Naive thymus-derived CD4-positive, alpha-beta T cell (primary cell): ENCODE measurements at regions of chr9 and their contacts with region 1.

Region 1: DNA sequence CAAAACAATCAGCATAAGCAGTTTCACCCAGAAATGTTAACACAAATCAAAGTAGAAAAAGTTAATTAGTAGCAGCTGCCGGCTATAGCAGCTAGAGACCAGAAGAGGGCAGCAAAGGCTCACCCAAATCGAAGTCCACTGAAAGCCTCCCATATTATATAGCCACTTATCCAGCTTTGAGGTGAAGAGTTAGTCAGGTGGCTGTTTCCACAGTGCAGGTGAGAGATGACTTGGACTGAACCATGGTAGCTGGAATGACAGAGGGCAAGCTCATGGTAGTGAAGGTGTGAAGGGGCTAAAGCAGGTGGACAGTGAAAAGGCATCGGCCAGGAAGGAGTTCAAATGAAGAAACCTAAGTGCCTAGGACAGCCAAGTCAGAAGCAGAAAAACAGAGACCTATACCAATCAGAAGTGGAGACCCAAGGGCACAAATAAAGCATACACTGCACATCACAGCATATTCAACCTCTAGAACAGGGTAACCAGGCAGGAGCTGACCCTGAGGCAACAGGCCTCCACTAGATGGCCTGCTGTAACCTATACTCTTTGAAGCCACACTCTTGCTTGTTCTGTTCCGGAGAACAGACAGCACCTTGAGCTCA is 7.2 kb upstream of the RNF38 start:
- DNase-seq: peak; percentile 18 to 77 (median 67)
- ATAC-seq: peak; percentile 96
- H3K4me3 ChIP-seq: no peak overlapping the region
- H3K4me3 Mint-ChIP-seq: peak overlapping the region in 3 of 10 donors; percentile 0 to 15 (median 14)
- H3K27ac ChIP-seq: peak overlapping the region; percentile 30
- H3K27ac Mint-ChIP-seq: peak overlapping the region; percentile 1 to 94 (median 71)
- H3K4me1 ChIP-seq: peaks cover 0 to 7% of the 10 kb centered on the region in 2 donors
- H3K4me1 Mint-ChIP-seq: peaks cover 11 to 42% (median 24%) of the 10 kb centered on the region in 7 donors
- H3K27me3 ChIP-seq: no peaks in the 10 kb centered on the region
- H3K27me3 Mint-ChIP-seq: no peaks in the 10 kb centered on the region

Region 2: GRCh38 chr9:35903049-35903448 is 504.2 kb before region 1 on chr9:
- CTCF ChIA-PET with region 1: no interaction called
- POLR2A ChIA-PET with region 1: no interaction called
- intact Hi-C with region 1: no loop called
- DNase-seq: peak in 7 of 9 donors; percentile 41 to 69 (median 63)
- ATAC-seq: peak; percentile 88
- H3K4me3 ChIP-seq: no peak overlapping the region
- H3K4me3 Mint-ChIP-seq: no peak overlapping the region
- H3K27ac ChIP-seq: no peak overlapping the region
- H3K27ac Mint-ChIP-seq: peak overlapping the region in 1 of 9 donors; percentile 67
- H3K4me1 ChIP-seq: peaks cover 3 to 31% of the 10 kb centered on the region in 2 donors
- H3K4me1 Mint-ChIP-seq: peaks cover 8 to 45% (median 28%) of the 10 kb centered on the region in 7 donors
- H3K27me3 ChIP-seq: peaks cover 0 to 3% of the 10 kb centered on the region in 2 donors
- H3K27me3 Mint-ChIP-seq: peaks cover 0 to 23% (median 0%) of the 10 kb centered on the region in 5 donors

Region 3: DNA sequence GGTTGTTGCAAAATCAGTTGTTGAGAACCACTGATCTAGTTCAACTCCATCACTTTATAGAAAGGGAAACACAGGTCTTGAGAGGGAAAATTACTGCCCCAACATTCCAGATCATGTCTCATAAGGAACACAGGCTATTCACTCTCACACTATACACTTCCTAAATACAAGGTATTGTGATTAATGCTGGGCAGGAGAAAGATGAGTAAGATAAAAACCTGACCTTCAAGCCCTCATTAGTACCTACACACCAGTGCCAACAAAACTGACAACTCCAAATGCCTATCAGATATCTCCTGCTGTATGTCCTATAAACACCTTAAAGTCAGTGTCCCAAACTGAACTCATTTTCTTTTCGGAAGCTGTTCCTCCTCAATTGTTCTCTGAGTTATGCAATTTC is 157.1 kb before region 1 on chr9:
- CTCF ChIA-PET with region 1: no interaction called
- POLR2A ChIA-PET with region 1: no interaction called
- intact Hi-C with region 1: loop called in 1 of 2 experiments (anchors 2 kb)
- DNase-seq: no peak
- ATAC-seq: no peak
- H3K4me3 ChIP-seq: no peak overlapping the region
- H3K4me3 Mint-ChIP-seq: no peak overlapping the region
- H3K27ac ChIP-seq: no peak overlapping the region
- H3K27ac Mint-ChIP-seq: peak overlapping the region in 2 of 9 donors; percentile 0 to 4
- H3K4me1 ChIP-seq: no peaks in the 10 kb centered on the region
- H3K4me1 Mint-ChIP-seq: peaks cover 10 to 25% (median 15%) of the 10 kb centered on the region in 7 donors
- H3K27me3 ChIP-seq: no peaks in the 10 kb centered on the region
- H3K27me3 Mint-ChIP-seq: no peaks in the 10 kb centered on the region

Region 4: DNA sequence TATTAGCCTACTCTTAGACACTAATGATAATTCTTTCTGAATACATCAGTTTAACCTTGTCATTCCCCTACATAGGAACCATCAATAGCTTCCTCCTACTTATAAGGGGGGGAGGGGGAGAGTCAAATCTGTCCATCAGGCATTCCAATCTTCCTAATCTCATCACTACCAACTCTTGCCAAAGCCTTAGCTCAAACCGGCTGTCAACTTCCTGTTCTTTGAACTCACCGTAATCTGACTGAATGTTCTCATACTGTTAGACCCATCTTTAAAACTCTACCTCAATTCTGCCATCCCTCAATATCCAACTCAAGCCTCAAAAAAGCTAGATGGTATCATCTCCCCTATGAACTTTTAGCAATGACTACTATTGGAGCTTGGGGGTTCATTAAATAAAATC is 34.7 kb after region 1 on chr9:
- CTCF ChIA-PET with region 1: interaction called, 21 read pairs
- POLR2A ChIA-PET with region 1: interaction called, 3 read pairs
- intact Hi-C with region 1: loop called in 1 of 2 experiments (anchors 2 kb)
- DNase-seq: peak in 3 of 9 donors; percentile 2 to 22 (median 14)
- ATAC-seq: peak; percentile 45
- H3K4me3 ChIP-seq: no peak overlapping the region
- H3K4me3 Mint-ChIP-seq: peak overlapping the region in 6 of 10 donors; percentile 1 to 51 (median 39)
- H3K27ac ChIP-seq: no peak overlapping the region
- H3K27ac Mint-ChIP-seq: peak overlapping the region in 1 of 9 donors; percentile 0
- H3K4me1 ChIP-seq: peaks cover 0 to 35% of the 10 kb centered on the region in 2 donors
- H3K4me1 Mint-ChIP-seq: peaks cover 30 to 81% (median 73%) of the 10 kb centered on the region in 7 donors
- H3K27me3 ChIP-seq: no peaks in the 10 kb centered on the region
- H3K27me3 Mint-ChIP-seq: no peaks in the 10 kb centered on the region

Region 5: DNA sequence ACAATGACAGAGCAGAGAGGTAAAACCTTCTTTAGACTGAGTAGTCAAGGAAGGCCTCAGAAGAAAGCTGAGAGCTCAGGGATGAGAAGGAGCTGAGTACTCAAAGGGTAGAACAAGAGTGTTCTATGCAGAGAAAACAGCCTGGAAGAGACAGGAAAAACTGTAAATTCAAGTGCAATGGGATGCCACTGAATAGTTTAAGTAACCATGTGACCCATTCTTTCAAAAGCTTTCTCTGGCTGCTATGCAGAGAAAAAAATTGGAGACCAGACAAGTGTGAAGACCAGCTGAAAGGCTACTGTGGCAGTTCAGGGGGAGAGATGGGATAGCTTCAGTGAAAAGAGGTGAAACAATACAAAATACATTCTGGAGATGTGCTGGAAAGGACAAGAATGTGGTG is 54.1 kb after region 1 on chr9:
- CTCF ChIA-PET with region 1: interaction called, 15 read pairs
- POLR2A ChIA-PET with region 1: no interaction called
- intact Hi-C with region 1: loop called in 1 of 2 experiments (anchors 2 kb)
- DNase-seq: no peak
- ATAC-seq: peak; percentile 12
- H3K4me3 ChIP-seq: no peak overlapping the region
- H3K4me3 Mint-ChIP-seq: no peak overlapping the region
- H3K27ac ChIP-seq: no peak overlapping the region
- H3K27ac Mint-ChIP-seq: peak overlapping the region; percentile 29 to 71 (median 57)
- H3K4me1 ChIP-seq: peaks cover 18 to 23% of the 10 kb centered on the region in 2 donors
- H3K4me1 Mint-ChIP-seq: peaks cover 36 to 76% (median 68%) of the 10 kb centered on the region in 7 donors
- H3K27me3 ChIP-seq: no peaks in the 10 kb centered on the region
- H3K27me3 Mint-ChIP-seq: no peaks in the 10 kb centered on the region

Region 6: DNA sequence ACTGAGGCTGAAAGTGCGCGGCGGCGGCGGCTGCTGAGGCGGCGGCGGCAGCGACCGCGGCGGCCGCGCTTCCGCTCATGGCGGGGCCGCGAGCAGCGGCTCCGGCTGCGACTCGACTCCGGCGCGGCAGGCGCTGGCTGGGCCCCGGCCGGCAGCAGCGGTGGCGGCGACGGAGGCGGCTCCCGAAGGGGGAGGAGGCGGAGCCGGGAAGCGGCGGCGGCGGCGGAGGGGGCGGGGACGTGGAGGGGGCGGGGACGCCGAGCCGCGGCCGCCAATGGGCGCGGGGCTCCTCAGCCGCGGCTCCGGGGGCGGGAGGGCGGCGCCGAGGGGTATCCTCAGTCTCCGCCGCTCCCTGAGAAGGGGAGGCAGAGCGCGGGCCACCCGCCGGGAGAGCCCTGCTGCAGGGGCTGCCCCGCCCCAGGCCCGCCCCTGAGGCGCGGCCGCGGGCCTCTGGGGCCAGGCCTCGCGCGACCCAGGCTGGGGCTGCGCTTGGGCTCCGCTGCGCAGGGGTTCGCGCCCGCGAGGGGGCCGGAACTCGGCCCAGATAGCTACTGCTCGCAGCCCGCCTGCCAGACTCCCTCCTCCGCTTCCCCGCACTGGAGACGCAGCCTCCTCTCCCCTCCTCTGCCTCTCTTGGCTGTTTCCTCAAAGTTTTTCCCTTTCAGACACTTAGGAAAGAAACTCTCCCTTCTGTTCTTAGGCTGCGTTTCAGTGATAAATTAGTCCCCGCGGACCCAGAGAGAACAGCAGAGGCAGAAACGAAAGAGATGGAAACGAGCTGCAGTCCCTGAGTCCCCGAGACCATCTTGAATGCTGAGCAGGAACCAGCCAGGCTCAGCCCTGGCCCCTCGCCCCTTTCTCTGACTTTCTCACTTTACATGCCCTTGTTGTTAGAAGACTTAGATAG is 80.5 kb after region 1 on chr9:
- CTCF ChIA-PET with region 1: interaction called, 11 read pairs
- POLR2A ChIA-PET with region 1: interaction called, 11 read pairs
- intact Hi-C with region 1: loop called in 1 of 2 experiments (anchors 1 kb)
- DNase-seq: peak; percentile 84 to 93 (median 89)
- ATAC-seq: peak; percentile 94
- H3K4me3 ChIP-seq: peak overlapping the region; percentile 77
- H3K4me3 Mint-ChIP-seq: peak overlapping the region; percentile 87 to 99 (median 96)
- H3K27ac ChIP-seq: peak overlapping the region; percentile 96
- H3K27ac Mint-ChIP-seq: peak overlapping the region; percentile 95 to 100 (median 98)
- H3K4me1 ChIP-seq: peaks cover 30 to 39% of the 10 kb centered on the region in 2 donors
- H3K4me1 Mint-ChIP-seq: peaks cover 33 to 77% (median 64%) of the 10 kb centered on the region in 7 donors
- H3K27me3 ChIP-seq: no peaks in the 10 kb centered on the region
- H3K27me3 Mint-ChIP-seq: no peaks in the 10 kb centered on the region

Region 7: GRCh38 chr9:36560857-36561221 is 153.6 kb after region 1 on chr9:
- CTCF ChIA-PET with region 1: interaction called, 253 read pairs
- POLR2A ChIA-PET with region 1: interaction called, 5 read pairs
- intact Hi-C with region 1: no loop called
- DNase-seq: no peak
- ATAC-seq: no peak
- H3K4me3 ChIP-seq: no peak overlapping the region
- H3K4me3 Mint-ChIP-seq: no peak overlapping the region
- H3K27ac ChIP-seq: no peak overlapping the region
- H3K27ac Mint-ChIP-seq: no peak overlapping the region
- H3K4me1 ChIP-seq: no peaks in the 10 kb centered on the region
- H3K4me1 Mint-ChIP-seq: peaks cover 0 to 2% (median under 1%) of the 10 kb centered on the region in 7 donors
- H3K27me3 ChIP-seq: no peaks in the 10 kb centered on the region
- H3K27me3 Mint-ChIP-seq: no peaks in the 10 kb centered on the region

Region 8: DNA sequence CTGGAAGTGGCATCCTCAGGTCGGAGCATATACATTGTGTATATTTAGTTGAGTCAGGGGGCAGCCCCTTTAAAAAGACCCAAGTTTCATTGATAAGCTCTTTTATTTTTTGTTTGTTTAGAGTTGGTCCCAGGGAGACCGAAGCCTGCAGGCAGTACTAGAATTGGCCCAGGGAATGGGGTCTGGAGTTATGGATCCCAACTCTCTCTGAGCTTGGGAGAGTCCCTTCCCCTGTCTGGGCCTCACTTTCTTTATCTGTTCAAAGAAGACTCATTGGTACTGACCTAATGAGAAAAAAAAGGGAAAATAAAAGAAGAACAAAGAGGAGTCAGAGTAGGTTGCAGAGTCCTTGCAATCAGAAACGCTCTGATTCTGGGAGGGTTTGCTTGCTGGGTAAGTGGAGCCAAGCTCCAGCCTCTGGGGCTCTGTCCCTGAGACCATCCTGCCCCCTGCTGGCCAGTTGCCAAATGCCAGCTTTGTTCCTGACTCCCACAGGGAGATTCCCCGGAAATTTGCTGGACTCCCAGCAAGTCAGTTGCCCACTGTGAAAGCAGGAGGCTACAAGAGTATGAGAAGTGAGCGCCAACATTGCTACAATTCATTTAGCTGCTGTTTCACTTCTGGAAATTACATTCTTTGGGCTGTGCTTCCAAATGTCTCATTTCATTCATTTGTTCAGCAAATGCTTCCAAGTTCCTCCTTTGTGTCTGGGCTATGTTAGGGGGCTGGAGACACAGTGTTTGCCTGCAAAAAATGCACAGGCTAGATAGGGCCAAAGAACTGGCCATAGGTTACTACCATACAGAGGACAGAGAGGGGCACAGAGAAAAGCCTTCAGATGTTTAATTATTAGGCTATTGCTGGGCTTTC is 321.7 kb after region 1 on chr9:
- CTCF ChIA-PET with region 1: interaction called, 43 read pairs
- POLR2A ChIA-PET with region 1: no interaction called
- intact Hi-C with region 1: loop called in 1 of 2 experiments (anchors 1 kb)
- DNase-seq: peak in 8 of 9 donors; percentile 33 to 71 (median 40)
- ATAC-seq: peak; percentile 73
- H3K4me3 ChIP-seq: no peak overlapping the region
- H3K4me3 Mint-ChIP-seq: no peak overlapping the region
- H3K27ac ChIP-seq: no peak overlapping the region
- H3K27ac Mint-ChIP-seq: no peak overlapping the region
- H3K4me1 ChIP-seq: no peaks in the 10 kb centered on the region
- H3K4me1 Mint-ChIP-seq: peaks cover 0 to 6% (median 0%) of the 10 kb centered on the region in 7 donors
- H3K27me3 ChIP-seq: no peaks in the 10 kb centered on the region
- H3K27me3 Mint-ChIP-seq: no peaks in the 10 kb centered on the region

Region 9: DNA sequence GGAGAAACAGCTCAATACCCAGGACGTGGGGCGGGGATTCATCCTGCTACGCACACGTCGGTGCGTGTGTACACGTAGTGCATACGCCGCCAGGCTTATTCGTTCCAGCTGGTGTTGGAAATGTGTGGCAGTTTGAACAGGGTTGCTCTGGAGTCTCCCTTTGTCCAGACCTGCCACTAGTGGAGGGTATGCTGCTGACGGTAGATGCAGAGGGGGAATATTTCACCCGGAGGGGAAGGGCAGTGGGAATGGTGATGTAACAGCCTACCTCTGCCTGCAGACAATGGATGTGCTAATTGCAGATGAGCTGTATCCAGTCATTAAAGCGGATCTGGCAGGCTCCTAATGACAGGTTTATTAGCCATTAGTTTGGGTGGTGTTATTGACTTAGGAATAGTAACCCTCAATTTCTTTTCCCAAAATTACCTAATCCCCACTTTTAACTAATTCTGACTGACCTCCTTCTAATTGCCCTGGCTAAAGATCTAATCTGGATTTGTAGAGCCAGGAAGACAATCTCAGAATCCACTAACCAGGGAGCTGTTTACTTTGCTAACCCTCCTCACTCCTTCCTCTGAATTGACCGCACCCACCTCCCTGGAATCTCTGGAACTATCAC is 484.2 kb after region 1 on chr9:
- CTCF ChIA-PET with region 1: no interaction called
- POLR2A ChIA-PET with region 1: no interaction called
- intact Hi-C with region 1: no loop called
- DNase-seq: no peak
- ATAC-seq: no peak
- H3K4me3 ChIP-seq: no peak overlapping the region
- H3K4me3 Mint-ChIP-seq: no peak overlapping the region
- H3K27ac ChIP-seq: no peak overlapping the region
- H3K27ac Mint-ChIP-seq: no peak overlapping the region
- H3K4me1 ChIP-seq: no peaks in the 10 kb centered on the region
- H3K4me1 Mint-ChIP-seq: no peaks in the 10 kb centered on the region
- H3K27me3 ChIP-seq: no peaks in the 10 kb centered on the region
- H3K27me3 Mint-ChIP-seq: peaks cover 0 to 24% (median 11%) of the 10 kb centered on the region in 5 donors